Panc1 (cell line): ENCODE measurements at regions of chr1 and their contacts with region 1.

Region 1: DNA sequence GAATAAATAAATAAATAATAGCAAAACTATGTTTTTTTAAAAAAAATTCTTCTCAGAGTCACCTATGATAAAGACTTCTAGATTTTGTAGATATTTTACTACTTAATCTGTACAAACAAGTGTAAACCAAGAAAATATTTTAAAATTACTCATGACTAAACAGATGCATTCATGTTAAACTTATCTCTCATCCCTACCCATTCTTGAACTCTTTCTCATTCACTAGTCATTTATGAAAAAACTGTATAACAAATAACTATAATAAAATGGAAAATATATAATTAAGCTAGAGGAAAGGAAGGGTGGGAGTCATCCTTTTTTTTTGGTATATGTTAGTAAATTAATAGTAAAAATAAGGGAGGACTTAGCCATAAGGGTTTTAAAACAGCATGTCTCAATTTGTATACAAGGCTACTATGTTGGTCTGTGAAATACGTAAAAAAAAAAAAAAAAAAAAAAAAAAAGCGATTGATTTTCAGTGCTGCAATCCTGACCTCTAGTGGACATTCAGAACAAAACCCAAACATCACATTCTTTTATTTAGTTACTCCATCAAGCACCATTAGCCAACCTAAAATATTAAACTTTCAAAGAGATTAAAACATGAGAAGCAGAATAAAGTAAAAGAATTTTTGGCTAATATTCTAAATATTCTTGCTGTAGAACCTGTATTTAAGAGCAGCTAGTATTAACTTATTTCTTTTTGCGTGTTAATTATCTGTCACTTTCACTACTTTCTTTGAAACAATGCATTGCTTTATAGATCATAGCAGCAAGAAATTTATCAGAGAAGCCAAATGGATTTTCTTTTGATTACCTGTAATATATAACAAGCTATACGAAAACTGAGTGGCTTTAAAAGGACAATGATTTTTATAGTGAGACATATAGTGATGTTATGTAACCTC is 255.8 kb upstream of the CACYBP start:
- DNase-seq: peak; percentile 12
- ATAC-seq: no peak
- H3K4me3 ChIP-seq: no peak overlapping the region
- H3K27ac ChIP-seq: no peak overlapping the region
- H3K4me1 ChIP-seq: no peaks in the 10 kb centered on the region
- H3K27me3 ChIP-seq: no peaks in the 10 kb centered on the region
- CTCF ChIP-seq: peak; percentile 72; the same call in 1 of the 2 replicates

Region 2: GRCh38 chr1:173742203-173742886 is 1001.6 kb before region 1 on chr1:
- CTCF ChIA-PET with region 1: no interaction called
- POLR2A ChIA-PET with region 1: no interaction called
- in situ Hi-C with region 1: no loop called
- intact Hi-C with region 1: no loop called
- DNase-seq: no peak
- ATAC-seq: no peak
- H3K4me3 ChIP-seq: no peak overlapping the region
- H3K27ac ChIP-seq: no peak overlapping the region
- H3K4me1 ChIP-seq: no peaks in the 10 kb centered on the region
- H3K27me3 ChIP-seq: no peaks in the 10 kb centered on the region
- CTCF ChIP-seq: no peak

Region 3: GRCh38 chr1:174262349-174263241 is 481.3 kb before region 1 on chr1:
- CTCF ChIA-PET with region 1: interaction called, 4 read pairs
- POLR2A ChIA-PET with region 1: no interaction called
- in situ Hi-C with region 1: no loop called
- intact Hi-C with region 1: loop called (anchors 5 kb)
- DNase-seq: peak; percentile 35
- ATAC-seq: peak; percentile 81
- H3K4me3 ChIP-seq: no peak overlapping the region
- H3K27ac ChIP-seq: no peak overlapping the region
- H3K4me1 ChIP-seq: no peaks in the 10 kb centered on the region
- H3K27me3 ChIP-seq: no peaks in the 10 kb centered on the region
- CTCF ChIP-seq: peak; percentile 84

Region 4: GRCh38 chr1:174469687-174470086 is 274.2 kb before region 1 on chr1:
- CTCF ChIA-PET with region 1: interaction called, 11 read pairs
- POLR2A ChIA-PET with region 1: no interaction called
- in situ Hi-C with region 1: no loop called
- intact Hi-C with region 1: no loop called
- DNase-seq: no peak
- ATAC-seq: no peak
- H3K4me3 ChIP-seq: no peak overlapping the region
- H3K27ac ChIP-seq: no peak overlapping the region
- H3K4me1 ChIP-seq: no peaks in the 10 kb centered on the region
- H3K27me3 ChIP-seq: no peaks in the 10 kb centered on the region
- CTCF ChIP-seq: no peak